A673 (cell line): ENCODE measurements at regions of chr9 and their contacts with region 1.

Region 1: GRCh38 chr9:35071814-35072460 is 488 bp downstream of the VCP start:
- DNase-seq: peak; percentile 81
- H3K4me3 ChIP-seq: peak overlapping the region; percentile 98
- H3K27ac ChIP-seq: peak overlapping the region; percentile 100
- H3K4me1 ChIP-seq: peaks cover 6% of the 10 kb centered on the region
- H3K27me3 ChIP-seq: no peaks in the 10 kb centered on the region
- CTCF ChIP-seq: 0 out of 2 replicates have a peak, but pooled peaks have one; percentile 9

Region 2: DNA sequence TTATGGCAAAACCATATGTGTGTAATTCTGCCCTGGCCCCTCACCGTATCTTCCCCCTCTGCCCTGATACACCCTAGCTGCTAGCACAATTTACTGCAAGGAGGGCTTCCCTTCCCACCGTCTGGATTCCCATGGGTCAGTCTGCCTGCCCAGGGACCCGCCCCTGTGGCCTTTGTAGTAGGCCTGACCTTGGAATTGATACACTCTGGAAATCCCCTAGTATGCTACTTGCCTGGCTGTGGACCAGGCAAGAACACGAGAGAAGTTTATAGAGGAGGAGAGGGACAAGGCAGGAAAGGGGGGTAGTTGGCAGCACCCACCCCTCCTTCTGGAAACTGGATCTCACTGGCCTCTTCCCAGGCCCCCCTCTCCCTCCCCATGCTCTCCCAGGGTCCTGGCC is 246.2 kb before region 1 on chr9:
- CTCF ChIA-PET with region 1: no interaction called
- POLR2A ChIA-PET with region 1: no interaction called
- intact Hi-C with region 1: no loop called
- DNase-seq: no peak
- H3K4me3 ChIP-seq: no peak overlapping the region
- H3K27ac ChIP-seq: no peak overlapping the region
- H3K4me1 ChIP-seq: no peaks in the 10 kb centered on the region
- H3K27me3 ChIP-seq: peaks cover 32% of the 10 kb centered on the region
- CTCF ChIP-seq: no peak

Region 3: GRCh38 chr9:35056571-35057270 is 15.2 kb before region 1 on chr9:
- CTCF ChIA-PET with region 1: interaction called, 10 read pairs
- POLR2A ChIA-PET with region 1: no interaction called
- intact Hi-C with region 1: no loop called
- DNase-seq: no peak
- H3K4me3 ChIP-seq: no peak overlapping the region
- H3K27ac ChIP-seq: no peak overlapping the region
- H3K4me1 ChIP-seq: no peaks in the 10 kb centered on the region
- H3K27me3 ChIP-seq: no peaks in the 10 kb centered on the region
- CTCF ChIP-seq: no peak

Region 4: DNA sequence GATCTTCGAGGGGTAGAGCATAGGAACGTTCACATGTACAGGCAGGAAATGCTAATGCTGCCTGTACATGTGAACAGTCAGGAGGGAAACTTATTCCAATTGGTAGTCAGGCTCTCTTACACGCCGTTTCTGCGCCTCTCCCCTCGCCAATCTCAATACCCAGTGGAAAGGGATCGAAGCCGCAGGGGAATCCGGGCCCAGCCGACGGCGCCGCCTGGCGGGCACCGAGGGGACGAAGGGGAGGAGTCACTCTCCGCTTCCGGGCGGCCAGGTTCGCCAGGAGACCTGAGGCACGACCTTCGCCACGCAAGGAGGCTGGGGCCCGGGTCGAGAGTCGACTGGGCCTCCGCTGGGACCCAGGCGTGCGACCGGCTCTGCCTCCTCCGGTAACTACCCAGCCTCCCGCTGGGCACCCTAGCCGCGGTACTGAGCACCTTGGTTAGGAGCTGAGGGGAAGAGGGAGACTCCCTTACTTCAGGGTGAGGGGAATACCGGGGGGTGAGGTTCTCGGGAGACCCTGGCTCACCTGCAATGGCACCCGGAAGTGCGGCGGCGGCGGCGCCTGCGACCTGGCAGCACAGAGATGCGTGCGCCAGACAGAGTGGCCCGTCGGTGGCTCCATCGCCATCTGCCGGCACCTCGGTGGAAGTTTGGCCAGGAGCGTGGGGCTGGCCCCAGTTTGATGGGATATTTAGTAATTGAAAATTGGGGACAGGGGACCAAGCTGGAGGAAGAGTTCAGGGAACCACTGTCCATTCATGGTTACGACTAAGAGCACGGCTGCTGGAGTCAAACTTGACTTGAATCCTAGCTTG is 24.3 kb after region 1 on chr9 and contains the start of gene PIGO:
- CTCF ChIA-PET with region 1: no interaction called
- POLR2A ChIA-PET with region 1: no interaction called
- intact Hi-C with region 1: loop called (anchors 1 kb)
- DNase-seq: peak; percentile 90
- H3K4me3 ChIP-seq: peak within 1 kb of the TSS; percentile 96
- H3K27ac ChIP-seq: peak within 1 kb of the TSS; percentile 99
- H3K4me1 ChIP-seq: peaks cover 7% of the 10 kb centered on the region
- H3K27me3 ChIP-seq: no peaks in the 10 kb centered on the region
- CTCF ChIP-seq: peak; percentile 77
- total RNA-seq, gene PIGO: 32.9 and 34.3 TPM in 2 replicates